Naive thymus-derived CD4-positive, alpha-beta T cell (primary cell): ENCODE measurements at regions of chr7 and their contacts with region 1.

Region 1: GRCh38 chr7:129367700-129368388 is 66.4 kb upstream of the STRIP2 start:
- DNase-seq: peak; percentile 25 to 71 (median 60)
- ATAC-seq: peak; percentile 85
- H3K4me3 ChIP-seq: peak overlapping the region; percentile 10
- H3K4me3 Mint-ChIP-seq: peak overlapping the region in 8 of 10 donors; percentile 12 to 88 (median 34)
- H3K27ac ChIP-seq: no peak overlapping the region
- H3K27ac Mint-ChIP-seq: peak overlapping the region in 5 of 9 donors; percentile 10 to 91 (median 25)
- H3K4me1 ChIP-seq: peaks cover 8% of the 10 kb centered on the region in 2 donors
- H3K4me1 Mint-ChIP-seq: peaks cover 10 to 48% (median 16%) of the 10 kb centered on the region in 7 donors
- H3K27me3 ChIP-seq: no peaks in the 10 kb centered on the region
- H3K27me3 Mint-ChIP-seq: no peaks in the 10 kb centered on the region

Region 2: GRCh38 chr7:128783143-128783861 is 584.5 kb before region 1 on chr7:
- CTCF ChIA-PET with region 1: no interaction called
- POLR2A ChIA-PET with region 1: no interaction called
- intact Hi-C with region 1: no loop called
- DNase-seq: no peak
- ATAC-seq: no peak
- H3K4me3 ChIP-seq: no peak overlapping the region
- H3K4me3 Mint-ChIP-seq: no peak overlapping the region
- H3K27ac ChIP-seq: no peak overlapping the region
- H3K27ac Mint-ChIP-seq: no peak overlapping the region
- H3K4me1 ChIP-seq: no peaks in the 10 kb centered on the region
- H3K4me1 Mint-ChIP-seq: peaks cover 0 to 5% (median 0%) of the 10 kb centered on the region in 7 donors
- H3K27me3 ChIP-seq: no peaks in the 10 kb centered on the region
- H3K27me3 Mint-ChIP-seq: peaks cover 0 to 26% (median 0%) of the 10 kb centered on the region in 5 donors

Region 3: DNA sequence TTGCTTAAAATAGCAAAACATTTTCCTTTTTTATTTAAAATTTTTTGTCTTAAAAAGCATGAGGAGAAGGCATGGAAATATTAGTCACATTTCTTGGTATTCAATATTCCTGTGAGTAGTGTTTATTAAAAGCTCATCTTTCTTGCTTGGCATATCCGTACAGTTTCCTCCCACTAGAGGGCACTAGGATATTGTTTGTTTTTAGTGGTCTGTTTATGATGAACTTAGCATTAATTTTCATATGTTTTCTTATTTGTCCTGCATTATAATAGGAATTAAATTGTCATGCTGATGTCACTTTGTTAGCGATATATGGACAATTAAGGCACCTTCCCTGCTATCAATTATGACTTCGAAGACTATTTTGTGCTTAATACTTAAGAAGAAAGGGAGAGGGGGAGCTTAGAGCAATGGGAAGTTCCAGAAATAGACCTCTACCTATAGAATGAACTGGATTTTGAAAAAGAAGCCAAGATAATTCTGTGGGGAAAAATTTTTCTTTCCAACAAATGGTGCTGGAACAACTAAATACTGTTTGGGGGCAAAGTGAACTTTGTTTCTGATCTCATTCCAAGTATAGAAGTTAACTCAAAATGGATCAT is 24.6 kb before region 1 on chr7:
- CTCF ChIA-PET with region 1: interaction called, 5 read pairs
- POLR2A ChIA-PET with region 1: no interaction called
- intact Hi-C with region 1: loop called in 1 of 2 experiments (anchors 1 kb)
- DNase-seq: peak in 7 of 9 donors; percentile 7 to 37 (median 22)
- ATAC-seq: peak; percentile 61
- H3K4me3 ChIP-seq: no peak overlapping the region
- H3K4me3 Mint-ChIP-seq: no peak overlapping the region
- H3K27ac ChIP-seq: no peak overlapping the region
- H3K27ac Mint-ChIP-seq: no peak overlapping the region
- H3K4me1 ChIP-seq: no peaks in the 10 kb centered on the region
- H3K4me1 Mint-ChIP-seq: peaks cover 6 to 35% (median 19%) of the 10 kb centered on the region in 7 donors
- H3K27me3 ChIP-seq: no peaks in the 10 kb centered on the region
- H3K27me3 Mint-ChIP-seq: no peaks in the 10 kb centered on the region

Region 4: GRCh38 chr7:129433847-129434674 is 66.2 kb after region 1 on chr7 and contains the start of gene STRIP2:
- CTCF ChIA-PET with region 1: no interaction called
- POLR2A ChIA-PET with region 1: no interaction called
- intact Hi-C with region 1: loop called (anchors 1 to 5 kb)
- DNase-seq: peak; percentile 77 to 97 (median 86)
- ATAC-seq: peak; percentile 98
- H3K4me3 ChIP-seq: peak within 1 kb of the TSS; percentile 85
- H3K4me3 Mint-ChIP-seq: peak within 1 kb of the TSS; percentile 90 to 98 (median 93)
- H3K27ac ChIP-seq: peak within 1 kb of the TSS; percentile 52
- H3K27ac Mint-ChIP-seq: peak within 1 kb of the TSS; percentile 11 to 91 (median 69)
- H3K4me1 ChIP-seq: peaks cover 6 to 14% of the 10 kb centered on the region in 2 donors
- H3K4me1 Mint-ChIP-seq: peaks cover 9 to 43% (median 17%) of the 10 kb centered on the region in 7 donors
- H3K27me3 ChIP-seq: peaks cover 4 to 6% of the 10 kb centered on the region in 2 donors
- H3K27me3 Mint-ChIP-seq: peaks cover 8 to 34% (median 29%) of the 10 kb centered on the region in 5 donors
- total RNA-seq, gene STRIP2: 0.14 to 21.4 (median 0.27) TPM in 4 of 5 experiments, not detected in the other

Region 5: DNA sequence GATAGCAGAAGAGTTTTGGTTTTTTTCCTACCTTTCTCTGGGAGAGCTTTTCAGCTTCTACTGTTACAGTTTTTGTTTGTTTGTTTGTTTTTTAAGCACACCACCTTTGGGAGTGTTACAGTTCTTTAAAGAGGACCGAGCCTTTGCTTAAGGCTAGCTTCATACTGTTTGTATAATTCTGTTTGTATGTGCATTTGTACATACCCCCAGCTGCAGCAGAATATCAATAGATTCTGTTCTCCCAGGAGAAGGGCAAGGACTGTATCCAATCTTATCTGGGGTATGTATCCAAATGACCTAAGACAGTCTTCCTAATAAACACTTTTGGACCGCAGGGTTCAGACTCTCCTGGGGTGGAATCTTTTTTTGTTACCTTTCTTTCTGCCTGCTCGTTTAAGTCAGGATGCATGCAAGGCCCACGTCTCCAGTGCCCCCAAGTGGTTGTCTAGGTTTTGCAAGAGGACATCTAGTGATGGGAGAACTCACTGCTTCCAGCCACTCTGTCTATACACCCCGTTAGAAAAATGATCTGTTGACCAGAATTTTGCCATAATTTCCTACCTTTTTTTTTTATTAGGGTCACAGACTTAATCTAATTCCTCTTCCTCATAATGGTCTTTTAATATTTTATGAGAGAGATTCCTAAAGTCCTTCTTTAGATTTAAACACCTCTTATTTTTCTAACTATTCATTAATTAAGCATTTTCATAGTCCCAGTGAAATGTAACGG is 267.6 kb after region 1 on chr7:
- CTCF ChIA-PET with region 1: interaction called, 7 read pairs
- POLR2A ChIA-PET with region 1: no interaction called
- intact Hi-C with region 1: loop called (anchors 1 kb)
- DNase-seq: peak; percentile 20 to 73 (median 64)
- ATAC-seq: peak; percentile 97
- H3K4me3 ChIP-seq: no peak overlapping the region
- H3K4me3 Mint-ChIP-seq: peak overlapping the region in 1 of 10 donors; percentile 29
- H3K27ac ChIP-seq: peak overlapping the region; percentile 18
- H3K27ac Mint-ChIP-seq: peak overlapping the region in 8 of 9 donors; percentile 2 to 85 (median 42)
- H3K4me1 ChIP-seq: peaks cover 0 to 3% of the 10 kb centered on the region in 2 donors
- H3K4me1 Mint-ChIP-seq: peaks cover 16 to 73% (median 51%) of the 10 kb centered on the region in 7 donors
- H3K27me3 ChIP-seq: no peaks in the 10 kb centered on the region
- H3K27me3 Mint-ChIP-seq: no peaks in the 10 kb centered on the region

Region 6: GRCh38 chr7:130010689-130011412 is 643.0 kb after region 1 on chr7:
- CTCF ChIA-PET with region 1: interaction called, 6 read pairs
- POLR2A ChIA-PET with region 1: no interaction called
- intact Hi-C with region 1: loop called (anchors 1 to 2 kb)
- DNase-seq: peak; percentile 71 to 88 (median 81)
- ATAC-seq: peak; percentile 88
- H3K4me3 ChIP-seq: no peak overlapping the region
- H3K4me3 Mint-ChIP-seq: no peak overlapping the region
- H3K27ac ChIP-seq: no peak overlapping the region
- H3K27ac Mint-ChIP-seq: peak overlapping the region in 2 of 9 donors; percentile 81 to 88
- H3K4me1 ChIP-seq: no peaks in the 10 kb centered on the region
- H3K4me1 Mint-ChIP-seq: peaks cover 0 to 9% (median 1%) of the 10 kb centered on the region in 7 donors
- H3K27me3 ChIP-seq: no peaks in the 10 kb centered on the region
- H3K27me3 Mint-ChIP-seq: no peaks in the 10 kb centered on the region